K562 (cell line): ENCODE measurements at regions of chr12 and their contacts with region 1.

Region 1: DNA sequence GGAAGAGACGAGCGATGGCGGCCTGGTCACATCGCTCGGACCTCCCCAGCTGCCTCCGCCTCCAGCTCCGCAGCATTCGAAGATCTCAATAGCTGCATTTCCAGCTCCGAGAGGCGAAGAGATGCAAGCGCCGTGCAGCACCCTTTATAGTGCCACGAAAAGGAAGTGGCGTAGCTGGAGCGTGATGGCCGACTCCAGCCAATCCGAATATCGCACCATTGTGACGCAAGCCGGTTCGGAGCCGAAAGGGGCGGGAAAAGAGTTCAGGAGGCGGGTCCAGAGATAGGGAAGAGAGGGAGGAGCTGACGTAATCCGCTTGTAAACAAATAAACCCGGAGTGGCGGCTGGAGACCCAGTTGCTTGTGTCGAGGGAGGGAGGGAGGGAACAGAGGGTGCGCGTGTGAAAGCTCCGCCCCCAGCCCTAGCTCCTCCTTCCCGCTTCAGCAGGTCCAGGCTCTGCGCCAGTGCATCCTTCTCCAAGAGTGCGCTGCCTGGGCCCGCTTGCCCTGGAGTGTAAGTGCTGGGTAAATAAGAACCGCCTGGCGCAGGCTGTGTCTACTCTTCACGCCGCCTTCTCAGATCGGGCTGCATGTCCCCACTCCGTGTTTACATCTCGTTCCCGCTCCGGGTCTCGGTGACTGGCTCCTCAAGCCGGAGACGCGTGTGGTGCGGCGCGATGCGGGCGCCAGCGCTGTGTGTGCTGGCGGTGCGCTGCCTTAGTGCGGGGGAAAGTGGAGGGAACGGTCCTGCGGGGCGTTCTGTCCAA is at the start of gene BTG1:
- DNase-seq: peak; percentile 92 to 99 (median 96)
- ATAC-seq: peak; percentile 76
- H3K4me3 ChIP-seq: peak within 1 kb of the TSS; percentile 88
- H3K27ac ChIP-seq: peak within 1 kb of the TSS; percentile 87
- H3K4me1 ChIP-seq: peaks cover 20 to 25% of the 10 kb centered on the region in 2 experiments
- H3K27me3 ChIP-seq: no peaks in the 10 kb centered on the region
- CTCF ChIP-seq: no peak
- EP300 ChIP-seq: peak; percentile 43
- POLR2A ChIP-seq: peak; percentile 100
- RAD21 ChIP-seq: peak; percentile 16 to 17; a peak in 2 of 4 replicates
- polyA plus RNA-seq, gene BTG1: 3.7 to 4.3 TPM

Region 2: GRCh38 chr12:91637789-91638624 is 507.9 kb before region 1 on chr12:
- CTCF ChIA-PET with region 1: no interaction called
- POLR2A ChIA-PET with region 1: interaction called, 13 read pairs
- in situ Hi-C with region 1: no loop called
- intact Hi-C with region 1: loop called (anchors 2 kb)
- DNase-seq: no peak
- ATAC-seq: no peak
- H3K4me3 ChIP-seq: no peak overlapping the region
- H3K27ac ChIP-seq: no peak overlapping the region
- H3K4me1 ChIP-seq: peaks cover 0 to 9% of the 10 kb centered on the region in 2 experiments; a peak in 2 of 5 replicates
- H3K27me3 ChIP-seq: no peaks in the 10 kb centered on the region
- CTCF ChIP-seq: no peak
- EP300 ChIP-seq: no peak
- POLR2A ChIP-seq: no peak
- RAD21 ChIP-seq: no peak

Region 3: GRCh38 chr12:91883781-91884180 is 262.1 kb before region 1 on chr12:
- CTCF ChIA-PET with region 1: interaction called, 4 read pairs
- POLR2A ChIA-PET with region 1: interaction called, 17 read pairs
- in situ Hi-C with region 1: no loop called
- intact Hi-C with region 1: loop called (anchors 2 kb)
- DNase-seq: no peak
- ATAC-seq: no peak
- H3K4me3 ChIP-seq: no peak overlapping the region
- H3K27ac ChIP-seq: no peak overlapping the region
- H3K4me1 ChIP-seq: no peaks in the 10 kb centered on the region
- H3K27me3 ChIP-seq: no peaks in the 10 kb centered on the region
- CTCF ChIP-seq: no peak
- EP300 ChIP-seq: no peak
- POLR2A ChIP-seq: no peak
- RAD21 ChIP-seq: no peak

Region 4: DNA sequence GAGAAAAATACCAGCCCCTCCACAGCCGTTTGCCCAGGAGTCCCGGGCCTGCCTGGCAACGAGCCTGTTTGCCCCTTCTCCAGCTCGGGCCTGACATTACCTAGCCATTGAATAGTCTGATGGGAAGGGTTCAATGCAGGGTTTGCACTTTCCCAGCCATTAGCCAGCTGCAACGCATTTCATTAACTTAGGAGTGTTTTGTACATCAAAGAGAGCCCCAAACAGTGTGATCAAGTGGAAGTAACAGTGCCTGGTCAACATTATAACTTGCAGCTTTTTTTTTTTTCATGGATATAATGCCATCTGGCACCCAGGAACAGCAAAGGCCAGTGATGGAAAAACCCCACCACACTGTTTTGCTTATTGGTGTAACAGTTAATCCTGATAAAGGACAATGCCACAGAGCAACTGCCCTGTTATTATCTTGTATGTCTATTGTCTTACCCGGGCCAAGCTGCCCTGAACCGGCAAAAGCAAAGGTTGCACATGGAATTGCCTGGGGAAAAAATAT is 38.2 kb before region 1 on chr12:
- CTCF ChIA-PET with region 1: no interaction called
- POLR2A ChIA-PET with region 1: interaction called, 24 read pairs
- in situ Hi-C with region 1: no loop called
- intact Hi-C with region 1: no loop called
- DNase-seq: no peak
- ATAC-seq: peak; percentile 22; the same call in 2 of the 3 replicates
- H3K4me3 ChIP-seq: no peak overlapping the region
- H3K27ac ChIP-seq: no peak overlapping the region
- H3K4me1 ChIP-seq: peaks cover 8 to 38% of the 10 kb centered on the region in 2 experiments; a peak in 4 of 5 replicates
- H3K27me3 ChIP-seq: no peaks in the 10 kb centered on the region
- CTCF ChIP-seq: no peak
- EP300 ChIP-seq: no peak
- POLR2A ChIP-seq: no peak
- RAD21 ChIP-seq: no peak

Region 5: GRCh38 chr12:92170050-92170449 is 24.1 kb after region 1 on chr12:
- CTCF ChIA-PET with region 1: no interaction called
- POLR2A ChIA-PET with region 1: interaction called, 20 read pairs
- in situ Hi-C with region 1: no loop called
- intact Hi-C with region 1: no loop called
- DNase-seq: no peak
- ATAC-seq: no peak
- H3K4me3 ChIP-seq: no peak overlapping the region
- H3K27ac ChIP-seq: no peak overlapping the region
- H3K4me1 ChIP-seq: no peaks in the 10 kb centered on the region
- H3K27me3 ChIP-seq: no peaks in the 10 kb centered on the region
- CTCF ChIP-seq: no peak
- EP300 ChIP-seq: no peak
- POLR2A ChIP-seq: no peak
- RAD21 ChIP-seq: no peak

Region 6: DNA sequence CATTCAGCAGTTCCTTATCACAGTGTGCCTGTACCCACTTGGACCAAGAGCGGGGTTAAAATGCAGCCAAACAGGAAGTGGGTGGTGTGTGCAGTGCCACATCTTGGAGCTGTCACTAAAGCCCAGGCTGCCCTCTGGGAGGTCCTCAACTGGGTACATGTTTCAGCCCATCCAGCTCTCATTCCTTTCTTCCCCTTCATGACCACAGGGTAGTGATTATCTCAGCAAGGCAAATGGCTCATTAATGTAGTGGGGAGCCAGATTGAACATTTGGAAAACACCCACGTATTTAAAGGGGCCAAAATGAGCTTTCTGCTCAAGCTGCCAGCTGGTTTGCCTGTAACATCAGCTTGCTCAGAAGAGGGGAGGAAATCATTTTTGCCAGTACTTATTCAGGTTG is 210.5 kb after region 1 on chr12:
- CTCF ChIA-PET with region 1: no interaction called
- POLR2A ChIA-PET with region 1: no interaction called
- in situ Hi-C with region 1: no loop called
- intact Hi-C with region 1: loop called (anchors 5 kb)
- DNase-seq: no peak
- ATAC-seq: no peak
- H3K4me3 ChIP-seq: no peak overlapping the region
- H3K27ac ChIP-seq: no peak overlapping the region
- H3K4me1 ChIP-seq: peaks cover 23 to 27% of the 10 kb centered on the region in 2 experiments; a peak in 4 of 5 replicates
- H3K27me3 ChIP-seq: no peaks in the 10 kb centered on the region
- CTCF ChIP-seq: no peak
- EP300 ChIP-seq: no peak
- POLR2A ChIP-seq: no peak
- RAD21 ChIP-seq: no peak

Region 7: GRCh38 chr12:92649511-92650227 is 503.8 kb after region 1 on chr12:
- CTCF ChIA-PET with region 1: no interaction called
- POLR2A ChIA-PET with region 1: interaction called, 4 read pairs
- in situ Hi-C with region 1: no loop called
- intact Hi-C with region 1: loop called (anchors 1 kb)
- DNase-seq: peak; percentile 42 to 77 (median 50)
- ATAC-seq: peak; percentile 97
- H3K4me3 ChIP-seq: no peak overlapping the region
- H3K27ac ChIP-seq: no peak overlapping the region
- H3K4me1 ChIP-seq: no peaks in the 10 kb centered on the region
- H3K27me3 ChIP-seq: peaks cover 8 to 13% of the 10 kb centered on the region in 2 experiments; a peak in 4 of 5 replicates
- CTCF ChIP-seq: peak; percentile 65 to 78 (median 66)
- EP300 ChIP-seq: no peak
- POLR2A ChIP-seq: no peak
- RAD21 ChIP-seq: peak; percentile 81 to 89